Activated T-helper 1 cell treated with anti-CD3 and anti-CD28 coated beads, Interleukin-12 subunit alpha, Interleukin-12 subunit beta, Interleukin-2, Interleukin-4 antibody, amounts not matched to agents 30 ng/mL and 10 ng/mL and 1 ng/mL, durations not matched to agents 14 hours and 24 hours and 36 hours (primary cell): ENCODE measurements at regions of chr7 and their contacts with region 1.

Region 1: GRCh38 chr7:106736508-106737201 is 75.7 kb upstream of the CCDC71L start:
- DNase-seq: peak; percentile 31
- H3K4me3 Mint-ChIP-seq: no peak overlapping the region
- H3K27ac Mint-ChIP-seq: no peak overlapping the region
- H3K4me1 Mint-ChIP-seq: peaks cover 32% of the 10 kb centered on the region
- H3K27me3 Mint-ChIP-seq: peaks cover 2% of the 10 kb centered on the region

Region 2: DNA sequence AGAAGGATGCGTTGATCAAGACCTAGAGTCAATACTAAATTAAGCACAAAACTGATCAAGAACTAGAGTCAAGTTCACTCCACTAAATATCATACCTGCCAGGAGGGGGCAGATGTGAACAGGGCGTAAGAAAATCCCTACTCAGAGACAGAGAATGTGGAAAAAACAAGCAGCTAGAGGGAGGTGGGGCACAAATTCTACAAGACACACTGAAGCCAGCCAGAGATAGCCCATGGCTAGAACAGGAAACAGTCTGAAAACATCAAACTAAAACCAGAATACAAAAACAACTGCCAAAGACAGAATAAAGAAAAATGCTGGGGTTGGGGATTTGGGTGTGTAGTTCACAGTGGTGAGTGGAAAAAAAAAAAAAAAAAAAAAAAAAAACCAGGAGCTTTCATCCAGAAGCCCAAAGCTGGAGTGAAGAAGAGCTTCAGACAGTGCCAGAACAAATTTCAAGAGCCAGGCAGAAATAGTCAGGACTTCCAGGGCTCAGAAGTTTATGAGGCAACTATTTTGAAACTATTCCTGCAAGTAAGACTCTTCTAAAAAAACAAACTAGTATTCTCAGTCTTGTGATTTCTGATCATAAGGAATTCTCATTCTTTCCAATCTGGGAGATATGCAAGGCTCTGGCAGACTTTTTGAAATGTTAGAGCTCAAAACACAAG is 194.0 kb before region 1 on chr7:
- intact Hi-C with region 1: loop called (anchors 1 kb)
- DNase-seq: no peak
- H3K4me3 Mint-ChIP-seq: no peak overlapping the region
- H3K27ac Mint-ChIP-seq: no peak overlapping the region
- H3K4me1 Mint-ChIP-seq: peaks cover 12% of the 10 kb centered on the region
- H3K27me3 Mint-ChIP-seq: no peaks in the 10 kb centered on the region

Region 3: GRCh38 chr7:106609416-106609815 is 127.2 kb before region 1 on chr7:
- intact Hi-C with region 1: no loop called
- DNase-seq: no peak
- H3K4me3 Mint-ChIP-seq: no peak overlapping the region
- H3K27ac Mint-ChIP-seq: no peak overlapping the region
- H3K4me1 Mint-ChIP-seq: no peaks in the 10 kb centered on the region
- H3K27me3 Mint-ChIP-seq: no peaks in the 10 kb centered on the region

Region 4: GRCh38 chr7:106772655-106773108 is 36.0 kb after region 1 on chr7:
- intact Hi-C with region 1: loop called (anchors 2 kb)
- DNase-seq: no peak
- H3K4me3 Mint-ChIP-seq: peak overlapping the region; percentile 47
- H3K27ac Mint-ChIP-seq: peak overlapping the region; percentile 98
- H3K4me1 Mint-ChIP-seq: peaks cover 63% of the 10 kb centered on the region
- H3K27me3 Mint-ChIP-seq: no peaks in the 10 kb centered on the region